HEK293T (cell line): ENCODE measurements at regions of chr12 and their contacts with region 1.

Region 1: GRCh38 chr12:54005853-54006686 is 2.7 kb upstream of the HOXC8 start:
- DNase-seq: peak; percentile 77

Region 2: DNA sequence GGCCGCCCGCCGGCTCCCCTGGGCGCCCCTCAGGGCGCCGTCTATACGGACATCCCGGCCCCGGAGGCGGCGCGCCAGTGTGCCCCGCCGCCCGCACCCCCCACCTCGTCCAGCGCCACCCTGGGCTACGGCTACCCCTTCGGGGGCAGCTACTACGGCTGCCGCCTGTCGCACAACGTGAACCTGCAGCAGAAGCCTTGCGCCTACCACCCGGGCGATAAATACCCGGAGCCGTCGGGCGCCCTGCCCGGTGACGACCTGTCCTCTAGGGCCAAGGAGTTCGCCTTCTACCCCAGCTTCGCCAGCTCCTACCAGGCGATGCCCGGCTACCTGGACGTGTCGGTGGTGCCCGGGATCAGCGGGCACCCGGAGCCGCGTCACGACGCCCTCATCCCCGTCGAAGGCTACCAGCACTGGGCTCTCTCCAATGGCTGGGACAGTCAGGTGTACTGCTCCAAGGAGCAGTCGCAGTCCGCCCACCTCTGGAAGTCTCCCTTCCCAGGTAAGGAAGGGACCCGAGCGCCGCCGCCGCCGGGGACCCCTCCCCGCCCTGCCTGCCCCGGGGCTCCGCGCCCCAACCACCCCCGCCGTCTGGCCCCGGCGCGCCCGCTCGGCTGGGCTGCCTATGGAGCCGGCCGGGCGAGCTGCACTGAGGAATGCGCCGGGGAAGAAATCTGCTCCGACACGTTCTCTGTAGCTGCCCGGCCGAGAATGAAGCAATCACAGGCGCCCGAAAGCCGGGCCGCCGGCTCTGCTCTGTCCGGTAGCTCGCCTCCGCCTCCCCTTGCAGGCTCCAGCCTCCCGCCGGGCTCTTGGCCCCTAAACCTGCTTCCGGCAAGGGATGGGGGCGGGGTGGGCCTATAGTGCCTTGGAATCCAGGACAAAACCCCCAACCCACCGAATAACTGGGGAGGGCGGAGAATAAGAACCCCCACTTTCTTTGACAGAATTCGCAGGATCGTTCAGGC is 66.6 kb before region 1 on chr12:
- CTCF ChIA-PET with region 1: no interaction called
- POLR2A ChIA-PET with region 1: no interaction called
- DNase-seq: peak; percentile 39

Region 3: DNA sequence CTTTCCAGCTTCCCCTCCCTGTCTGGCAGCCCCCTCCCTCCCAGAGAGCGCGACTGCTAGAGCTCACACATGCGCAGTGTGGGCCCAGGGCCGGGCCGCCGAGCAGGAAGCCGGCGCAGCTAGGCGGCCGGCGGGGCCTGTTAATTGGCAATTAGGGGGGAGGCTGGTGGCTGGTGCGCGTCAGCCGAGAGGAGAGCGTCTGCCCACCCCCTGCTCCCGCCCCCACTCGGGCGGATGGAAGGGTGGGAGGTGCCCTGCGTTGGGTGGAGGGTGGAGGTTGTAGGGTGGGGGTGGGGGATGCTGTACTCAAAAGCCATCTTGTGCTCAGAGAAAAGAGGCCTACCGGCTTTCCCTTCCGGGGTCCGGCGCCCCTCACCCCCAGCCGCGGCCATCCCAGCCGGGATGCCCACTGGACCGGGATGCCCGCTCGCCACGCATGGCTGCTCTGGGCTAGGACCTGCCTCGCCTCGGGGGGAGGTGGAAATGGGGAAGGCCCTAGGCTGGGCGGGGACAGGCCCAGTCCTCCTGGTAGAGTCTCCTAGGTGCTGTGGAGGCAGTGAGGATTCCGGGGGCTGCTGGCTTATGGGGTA is 11.9 kb after region 1 on chr12:
- CTCF ChIA-PET with region 1: interaction called, 6 read pairs
- POLR2A ChIA-PET with region 1: interaction called, 23 read pairs
- DNase-seq: peak; percentile 90

Region 4: GRCh38 chr12:54025499-54026405 is 19.7 kb after region 1 on chr12:
- CTCF ChIA-PET with region 1: interaction called, 11 read pairs
- POLR2A ChIA-PET with region 1: interaction called, 4 read pairs
- DNase-seq: no peak

Region 5: GRCh38 chr12:54039417-54040147 is 33.5 kb after region 1 on chr12:
- CTCF ChIA-PET with region 1: interaction called, 4 read pairs
- POLR2A ChIA-PET with region 1: interaction called, 27 read pairs
- DNase-seq: no peak

Region 6: DNA sequence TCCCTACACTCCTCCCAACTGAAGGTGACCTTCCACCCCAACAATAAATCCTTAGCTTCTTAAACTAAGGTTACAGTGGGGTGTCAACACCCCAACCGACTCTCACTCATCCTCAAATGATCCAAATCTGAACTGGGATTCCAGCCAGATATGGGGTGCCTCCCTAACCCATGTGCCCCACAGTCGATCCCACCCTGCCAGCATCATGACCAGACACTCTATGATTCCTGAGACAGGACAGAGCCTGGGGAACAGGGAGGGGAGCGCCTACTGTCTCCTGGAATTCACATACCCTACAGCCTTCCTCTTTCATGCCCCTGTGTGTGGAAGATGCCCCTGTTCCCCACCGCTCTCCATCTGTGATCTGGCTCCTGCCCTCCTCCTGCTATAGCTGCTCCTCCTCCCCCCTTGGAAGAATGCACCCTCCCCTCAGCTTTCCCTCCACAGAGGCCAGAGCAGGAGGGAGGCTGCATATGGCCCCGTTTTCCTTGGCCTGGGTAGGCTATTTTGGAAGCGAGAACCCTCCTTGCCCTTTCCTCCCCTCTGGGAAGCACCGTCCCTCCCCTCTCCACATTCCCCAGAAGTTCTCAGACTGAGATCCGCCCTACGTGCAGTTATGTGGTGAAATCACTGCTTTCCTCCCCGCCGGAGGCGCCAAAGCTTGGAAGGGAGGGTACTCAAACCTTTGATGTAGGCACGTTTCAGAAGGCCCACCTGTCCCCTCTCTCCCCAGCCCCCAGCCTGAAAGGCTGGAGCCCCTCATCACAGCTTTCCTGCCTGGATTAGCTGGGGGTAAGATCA is 134.7 kb after region 1 on chr12:
- CTCF ChIA-PET with region 1: interaction called, 10 read pairs
- POLR2A ChIA-PET with region 1: interaction called, 4 read pairs
- DNase-seq: no peak

Region 7: GRCh38 chr12:54201001-54201794 is 195.1 kb after region 1 on chr12:
- CTCF ChIA-PET with region 1: interaction called, 15 read pairs
- POLR2A ChIA-PET with region 1: no interaction called
- DNase-seq: peak; percentile 82

Region 8: DNA sequence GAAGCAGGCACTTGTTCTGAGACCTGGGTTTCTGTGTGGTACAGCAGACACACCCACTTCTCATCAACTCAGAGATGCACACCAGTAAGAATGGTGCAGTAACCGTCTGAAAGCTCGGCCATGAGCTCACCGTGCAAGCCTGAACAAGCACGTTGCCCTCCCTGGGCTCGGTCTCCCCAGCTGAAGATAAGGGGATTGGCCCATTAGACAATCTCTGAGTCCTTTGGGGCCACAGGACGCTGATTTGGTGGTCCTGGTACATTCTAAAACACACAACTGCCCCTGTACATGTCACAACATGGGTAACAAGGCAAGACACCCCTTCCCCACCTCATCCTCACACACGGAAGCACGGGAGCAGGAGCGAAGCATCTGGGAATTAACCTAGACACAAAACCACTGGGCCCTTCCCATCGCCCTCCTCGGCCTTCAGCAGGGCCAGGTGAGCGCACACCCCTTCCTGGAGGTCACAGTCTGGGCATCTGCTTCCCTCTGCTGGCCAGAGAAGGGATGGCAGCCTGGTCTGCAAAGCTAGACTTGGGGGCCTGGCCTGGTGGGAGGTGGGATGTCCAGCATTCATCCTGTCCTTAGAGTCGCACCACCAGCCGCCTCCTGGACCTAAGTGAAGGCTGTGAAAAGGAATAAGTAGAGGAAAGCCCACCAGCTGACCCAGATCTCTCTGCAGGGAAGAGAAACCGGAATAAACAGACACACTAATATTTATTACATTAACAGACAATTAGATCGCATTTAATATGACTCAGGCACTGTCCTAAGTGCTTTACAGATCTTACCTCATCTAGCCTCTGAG is 201.6 kb after region 1 on chr12:
- CTCF ChIA-PET with region 1: interaction called, 15 read pairs
- POLR2A ChIA-PET with region 1: interaction called, 4 read pairs
- DNase-seq: peak; percentile 77